ENCODE measurements at regions of chr9 and their contacts with region 1.

Region 1: DNA sequence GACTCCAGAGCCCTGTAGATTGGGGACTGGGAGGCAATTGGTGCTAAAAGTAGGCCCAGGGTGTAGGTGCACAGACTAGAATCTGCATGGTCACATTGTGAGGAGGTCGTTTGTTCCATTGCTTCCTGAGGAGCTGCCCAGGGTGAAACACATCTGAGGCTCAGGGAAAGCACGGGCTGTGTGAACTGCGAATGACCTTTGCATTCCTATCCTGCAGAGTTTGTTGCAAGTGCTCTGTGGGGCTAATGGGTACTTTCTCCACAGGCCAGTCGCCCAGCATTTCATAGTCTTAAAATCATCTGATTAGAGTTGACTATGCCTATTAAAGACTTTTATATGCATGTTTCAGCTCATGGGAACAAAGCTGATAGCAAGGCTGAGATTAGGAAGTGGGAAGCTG is 14.4 kb upstream of the SLC46A2 start:
- DNase-seq: no peak
- H3K4me3 Mint-ChIP-seq: no peak overlapping the region
- H3K27ac Mint-ChIP-seq: no peak overlapping the region
- H3K4me1 Mint-ChIP-seq: peaks cover 5% of the 10 kb centered on the region
- H3K27me3 Mint-ChIP-seq: peaks cover 4% of the 10 kb centered on the region
- CTCF ChIP-seq: no peak

Region 2: GRCh38 chr9:112717661-112718341 is 187.3 kb before region 1 on chr9 and contains the start of gene INIP:
- CTCF ChIA-PET with region 1: interaction called, 3 read pairs
- POLR2A ChIA-PET with region 1: no interaction called
- intact Hi-C with region 1: loop called (anchors 5 kb)
- DNase-seq: peak; percentile 97
- H3K4me3 Mint-ChIP-seq: peak within 1 kb of the TSS; percentile 100
- H3K27ac Mint-ChIP-seq: peak within 1 kb of the TSS; percentile 98
- H3K4me1 Mint-ChIP-seq: peaks cover 8% of the 10 kb centered on the region
- H3K27me3 Mint-ChIP-seq: no peaks in the 10 kb centered on the region
- CTCF ChIP-seq: peak; percentile 6
- total RNA-seq, gene INIP: 28.0 and 33.5 TPM in 2 replicates

Region 3: DNA sequence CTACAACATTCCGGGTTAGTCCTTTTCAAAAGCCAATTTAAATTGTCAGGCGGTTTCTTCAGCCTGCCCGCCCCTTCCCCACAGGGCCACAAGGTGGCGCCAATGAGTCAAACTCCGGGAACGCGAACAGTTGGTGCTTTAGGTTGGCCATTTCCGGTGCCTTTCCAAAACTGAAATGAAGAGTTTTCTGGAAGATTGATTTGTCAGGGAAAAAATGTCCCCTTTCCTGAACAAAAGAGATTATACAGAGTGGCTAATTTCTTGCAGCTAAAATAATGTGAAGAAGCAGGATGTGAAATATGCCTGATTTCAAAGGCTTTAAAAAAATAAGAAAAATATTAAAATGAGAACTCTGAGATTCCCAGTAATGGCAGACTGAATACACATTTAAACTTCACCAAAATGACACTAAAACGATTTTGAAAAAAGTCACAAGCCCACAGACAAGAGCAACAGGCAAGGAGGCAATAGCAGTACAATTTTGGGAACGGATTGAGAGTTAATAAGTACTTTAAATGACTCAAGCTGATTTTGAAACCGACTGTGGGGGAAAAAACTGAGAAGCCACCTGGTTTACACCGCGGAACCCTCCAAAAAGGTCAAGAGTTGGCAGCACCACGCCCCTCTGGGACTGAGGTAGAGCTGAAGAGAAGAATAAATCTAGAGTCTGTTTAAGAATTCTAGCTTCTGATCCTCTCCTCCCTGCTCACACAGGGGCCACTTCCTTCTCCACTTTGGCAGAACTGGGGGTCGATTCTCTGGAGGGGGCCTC is 60.1 kb before region 1 on chr9:
- CTCF ChIA-PET with region 1: interaction called, 56 read pairs
- POLR2A ChIA-PET with region 1: interaction called, 4 read pairs
- intact Hi-C with region 1: loop called (anchors 1 kb)
- DNase-seq: peak; percentile 70
- H3K4me3 Mint-ChIP-seq: no peak overlapping the region
- H3K27ac Mint-ChIP-seq: peak overlapping the region; percentile 20
- H3K4me1 Mint-ChIP-seq: peaks cover 4% of the 10 kb centered on the region
- H3K27me3 Mint-ChIP-seq: no peaks in the 10 kb centered on the region
- CTCF ChIP-seq: peak; percentile 91

Region 4: GRCh38 chr9:112894041-112894440 is 11.0 kb before region 1 on chr9:
- CTCF ChIA-PET with region 1: interaction called, 17 read pairs
- POLR2A ChIA-PET with region 1: no interaction called
- intact Hi-C with region 1: no loop called
- DNase-seq: peak; percentile 8
- H3K4me3 Mint-ChIP-seq: no peak overlapping the region
- H3K27ac Mint-ChIP-seq: no peak overlapping the region
- H3K4me1 Mint-ChIP-seq: no peaks in the 10 kb centered on the region
- H3K27me3 Mint-ChIP-seq: no peaks in the 10 kb centered on the region
- CTCF ChIP-seq: no peak

Region 5: GRCh38 chr9:112921549-112921948 is 16.5 kb after region 1 on chr9:
- CTCF ChIA-PET with region 1: interaction called, 42 read pairs
- POLR2A ChIA-PET with region 1: no interaction called
- intact Hi-C with region 1: no loop called
- DNase-seq: peak; percentile 53
- H3K4me3 Mint-ChIP-seq: no peak overlapping the region
- H3K27ac Mint-ChIP-seq: no peak overlapping the region
- H3K4me1 Mint-ChIP-seq: no peaks in the 10 kb centered on the region
- H3K27me3 Mint-ChIP-seq: no peaks in the 10 kb centered on the region
- CTCF ChIP-seq: peak; percentile 50

Region 6: DNA sequence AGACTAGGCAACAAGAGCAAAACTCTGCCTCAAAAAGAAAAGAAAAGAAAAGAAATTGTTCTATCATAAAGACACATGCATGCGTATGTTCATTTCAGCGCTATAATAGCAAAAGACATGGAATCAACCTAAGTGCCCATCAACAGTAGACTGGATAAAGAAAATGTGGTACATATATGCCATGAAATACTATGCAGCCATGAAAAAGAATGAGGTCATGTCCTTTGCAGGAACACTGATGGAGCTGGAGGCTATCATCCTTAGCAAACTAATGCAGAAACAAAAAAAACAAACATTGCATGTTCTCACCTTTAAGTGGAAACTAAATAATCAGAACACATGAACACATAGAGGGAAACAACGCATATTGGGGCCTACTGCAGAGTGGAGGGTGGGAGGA is 113.2 kb after region 1 on chr9:
- CTCF ChIA-PET with region 1: no interaction called
- POLR2A ChIA-PET with region 1: no interaction called
- intact Hi-C with region 1: no loop called
- DNase-seq: no peak
- H3K4me3 Mint-ChIP-seq: no peak overlapping the region
- H3K27ac Mint-ChIP-seq: no peak overlapping the region
- H3K4me1 Mint-ChIP-seq: no peaks in the 10 kb centered on the region
- H3K27me3 Mint-ChIP-seq: no peaks in the 10 kb centered on the region
- CTCF ChIP-seq: no peak

Measured in MCF 10A (cell line).